ENCODE measurements at regions of chr2 and their contacts with region 1.

Region 1: DNA sequence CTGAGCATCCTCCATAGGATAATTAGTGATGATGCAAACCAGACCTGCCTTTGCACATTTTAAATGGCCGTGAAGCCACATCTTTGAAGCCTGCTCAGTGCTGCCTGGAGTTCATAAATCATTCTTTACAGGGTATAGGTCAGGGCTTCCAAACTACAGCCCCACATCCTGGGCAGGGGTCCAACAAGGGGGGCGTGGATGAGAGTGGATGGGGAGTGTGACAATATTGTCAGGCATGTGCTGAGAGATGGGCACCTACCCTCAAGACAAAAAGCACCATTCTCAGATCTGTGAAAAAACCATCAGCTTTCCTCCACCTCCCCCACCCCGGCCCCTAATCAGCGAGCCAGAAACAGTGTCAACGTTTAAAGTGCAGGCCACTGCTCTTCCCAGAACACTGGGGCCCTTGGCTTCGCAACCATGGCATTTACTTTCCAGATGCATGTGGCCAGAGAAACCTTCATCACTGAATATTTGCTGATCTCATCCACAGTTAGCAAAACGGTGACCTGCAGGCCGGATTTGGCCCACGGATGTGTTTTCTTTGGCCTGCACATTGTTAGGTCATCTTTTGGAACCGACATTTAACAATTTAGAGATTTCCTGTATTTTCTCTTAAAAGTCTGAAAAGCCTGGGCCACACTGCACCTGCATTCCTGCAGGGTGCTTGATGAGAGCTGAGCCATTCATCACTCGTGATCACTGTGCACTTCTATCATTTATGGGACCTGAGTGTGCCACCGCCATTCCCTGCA is 130.7 kb downstream of the ANKRD44 start:
- DNase-seq: peak; percentile 52
- H3K4me3 ChIP-seq: no peak overlapping the region
- H3K27ac ChIP-seq: peak overlapping the region; percentile 79
- H3K27me3 ChIP-seq: no peaks in the 10 kb centered on the region
- CTCF ChIP-seq: no peak

Region 2: DNA sequence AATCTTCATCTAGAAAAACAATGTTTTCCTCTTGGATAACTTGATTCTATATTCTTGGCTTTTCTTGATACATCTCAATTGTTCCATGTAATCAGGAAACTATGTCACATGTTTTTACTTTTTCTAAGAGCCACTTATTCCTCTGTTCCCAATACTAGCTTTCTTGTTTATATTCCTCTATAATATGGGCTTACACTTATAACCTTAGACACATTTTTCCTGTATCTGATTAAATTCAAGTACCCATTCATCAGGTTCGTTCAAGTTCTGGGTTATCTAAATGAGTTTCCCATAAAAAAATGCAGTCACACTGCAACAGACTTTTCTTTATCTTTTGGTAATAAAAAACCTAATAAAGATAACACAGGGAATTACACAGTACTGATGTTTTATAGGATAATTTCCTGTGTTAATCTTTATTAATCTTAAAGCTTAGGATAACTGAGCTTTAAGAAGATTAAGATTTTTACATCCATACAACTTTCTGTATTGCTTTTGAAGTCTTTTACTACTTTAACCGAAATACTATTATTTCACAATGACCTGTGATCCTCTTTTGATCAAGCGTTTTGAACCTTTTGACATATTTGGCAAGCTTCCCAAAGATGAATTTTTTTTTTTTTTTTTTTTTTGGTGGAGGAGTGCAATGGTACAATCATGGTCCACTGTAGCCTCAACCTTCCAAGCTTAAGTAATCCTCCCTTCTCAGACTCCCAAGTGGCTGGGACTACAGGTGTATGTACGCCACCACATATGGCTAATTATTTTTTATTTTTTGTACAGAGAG is 326.4 kb before region 1 on chr2:
- CTCF ChIA-PET with region 1: no interaction called
- POLR2A ChIA-PET with region 1: no interaction called
- DNase-seq: no peak
- H3K4me3 ChIP-seq: no peak overlapping the region
- H3K27ac ChIP-seq: no peak overlapping the region
- H3K27me3 ChIP-seq: no peaks in the 10 kb centered on the region
- CTCF ChIP-seq: no peak

Region 3: GRCh38 chr2:197168705-197169104 is 11.2 kb before region 1 on chr2:
- CTCF ChIA-PET with region 1: interaction called, 12 read pairs
- POLR2A ChIA-PET with region 1: no interaction called
- DNase-seq: no peak
- H3K4me3 ChIP-seq: no peak overlapping the region
- H3K27ac ChIP-seq: no peak overlapping the region
- H3K27me3 ChIP-seq: no peaks in the 10 kb centered on the region
- CTCF ChIP-seq: peak; percentile 54

Measured in AG04450 (cell line).